Activated T-helper 1 cell treated with anti-CD3 and anti-CD28 coated beads, Interleukin-12 subunit alpha, Interleukin-12 subunit beta, Interleukin-2, Interleukin-4 antibody, amounts not matched to agents 30 ng/mL and 10 ng/mL and 1 ng/mL, durations not matched to agents 14 hours and 24 hours and 36 hours (primary cell): ENCODE measurements at regions of chr14 and their contacts with region 1.

Region 1: GRCh38 chr14:31026395-31027118 is 378 bp upstream of the STRN3 start:
- DNase-seq: peak; percentile 90
- H3K4me3 Mint-ChIP-seq: peak overlapping the region; percentile 99
- H3K27ac Mint-ChIP-seq: peak overlapping the region; percentile 96
- H3K4me1 Mint-ChIP-seq: peaks cover 55% of the 10 kb centered on the region
- H3K27me3 Mint-ChIP-seq: no peaks in the 10 kb centered on the region

Region 2: DNA sequence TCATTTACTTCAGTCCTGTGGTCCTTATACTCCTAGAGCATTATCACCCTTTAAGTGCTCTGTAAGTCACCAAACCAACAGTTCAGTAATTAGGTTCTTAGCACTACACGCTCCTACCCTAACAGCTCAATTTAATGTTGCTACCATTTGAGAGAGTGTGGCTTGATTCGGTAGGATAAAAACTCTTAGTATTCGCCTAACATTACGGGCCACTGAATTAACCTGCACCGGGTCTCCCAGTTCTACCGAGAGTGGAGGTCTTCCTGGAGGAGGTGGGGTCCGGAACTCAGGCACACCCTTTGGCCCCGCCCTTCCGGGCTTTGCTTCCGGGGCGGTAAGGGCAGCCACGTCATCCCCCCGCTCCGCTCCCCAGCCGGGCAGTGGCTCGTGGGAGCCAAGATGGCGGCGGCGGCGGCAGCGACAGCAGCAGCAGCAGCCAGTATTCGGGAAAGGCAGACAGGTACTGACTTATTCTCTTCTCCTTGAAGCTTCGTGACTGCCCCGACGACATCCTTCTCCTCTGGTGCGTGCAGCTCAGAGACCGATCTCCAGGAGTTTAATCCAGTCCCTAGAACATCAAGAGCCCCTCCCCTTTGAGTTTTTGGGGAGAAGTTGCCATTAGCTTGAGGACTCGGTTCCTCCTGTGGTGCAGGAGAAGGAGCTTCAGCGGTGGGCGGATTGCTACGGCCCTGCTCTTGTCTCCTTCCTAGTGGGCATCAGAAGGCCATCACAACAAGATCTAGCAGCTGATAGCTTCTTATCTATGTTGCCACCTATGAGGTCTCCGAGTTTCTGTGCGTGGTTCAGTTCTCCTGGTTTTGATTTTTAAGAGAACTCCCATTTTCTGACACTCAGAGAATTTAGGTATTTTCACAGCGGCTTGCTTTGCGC is 404.4 kb before region 1 on chr14 and contains the start of gene SCFD1:
- intact Hi-C with region 1: loop called (anchors 1 kb)
- DNase-seq: peak; percentile 94
- H3K4me3 Mint-ChIP-seq: peak within 1 kb of the TSS; percentile 99
- H3K27ac Mint-ChIP-seq: peak within 1 kb of the TSS; percentile 98
- H3K4me1 Mint-ChIP-seq: peaks cover 56% of the 10 kb centered on the region
- H3K27me3 Mint-ChIP-seq: no peaks in the 10 kb centered on the region
- total RNA-seq, gene SCFD1: 73.1 and 77.3 TPM in 2 replicates

Region 3: GRCh38 chr14:31047503-31047902 is 20.9 kb after region 1 on chr14:
- intact Hi-C with region 1: loop called (anchors 1 kb)
- DNase-seq: no peak
- H3K4me3 Mint-ChIP-seq: no peak overlapping the region
- H3K27ac Mint-ChIP-seq: no peak overlapping the region
- H3K4me1 Mint-ChIP-seq: peaks cover 6% of the 10 kb centered on the region
- H3K27me3 Mint-ChIP-seq: peaks cover 4% of the 10 kb centered on the region

Region 4: GRCh38 chr14:31127690-31128089 is 101.1 kb after region 1 on chr14:
- intact Hi-C with region 1: loop called (anchors 2 kb)
- DNase-seq: peak; percentile 56
- H3K4me3 Mint-ChIP-seq: peak overlapping the region; percentile 16
- H3K27ac Mint-ChIP-seq: peak overlapping the region; percentile 64
- H3K4me1 Mint-ChIP-seq: peaks cover 31% of the 10 kb centered on the region
- H3K27me3 Mint-ChIP-seq: no peaks in the 10 kb centered on the region

Region 5: GRCh38 chr14:31420319-31421111 is 394.0 kb after region 1 on chr14 and contains the start of gene HEATR5A:
- intact Hi-C with region 1: loop called (anchors 5 kb)
- DNase-seq: peak; percentile 92
- H3K4me3 Mint-ChIP-seq: peak within 1 kb of the TSS; percentile 98
- H3K27ac Mint-ChIP-seq: peak within 1 kb of the TSS; percentile 90
- H3K4me1 Mint-ChIP-seq: peaks cover 26% of the 10 kb centered on the region
- H3K27me3 Mint-ChIP-seq: peaks cover 2% of the 10 kb centered on the region
- total RNA-seq, gene HEATR5A: 26.4 and 31.0 TPM in 2 replicates

Region 6: GRCh38 chr14:31561155-31561846 is 534.7 kb after region 1 on chr14 and contains the start of gene NUBPL:
- intact Hi-C with region 1: loop called (anchors 1 kb)
- DNase-seq: peak; percentile 95
- H3K4me3 Mint-ChIP-seq: peak within 1 kb of the TSS; percentile 94
- H3K27ac Mint-ChIP-seq: peak within 1 kb of the TSS; percentile 98
- H3K4me1 Mint-ChIP-seq: peaks cover 23% of the 10 kb centered on the region
- H3K27me3 Mint-ChIP-seq: peaks cover 16% of the 10 kb centered on the region
- total RNA-seq, gene NUBPL: 12.0 and 13.7 TPM in 2 replicates

Region 7: GRCh38 chr14:32252030-32252670 is 1225.6 kb after region 1 on chr14:
- intact Hi-C with region 1: loop called (anchors 5 kb)
- DNase-seq: peak; percentile 35
- H3K4me3 Mint-ChIP-seq: no peak overlapping the region
- H3K27ac Mint-ChIP-seq: no peak overlapping the region
- H3K4me1 Mint-ChIP-seq: no peaks in the 10 kb centered on the region
- H3K27me3 Mint-ChIP-seq: no peaks in the 10 kb centered on the region